Activated CD4-positive, alpha-beta T cell treated with anti-CD3 and anti-CD28 coated beads for 36 hours (primary cell): ENCODE measurements at regions of chr10 and their contacts with region 1.

Region 1: GRCh38 chr10:63268798-63269503 is 135.8 kb downstream of the NRBF2 start:
- DNase-seq: peak; percentile 86
- ATAC-seq: peak; percentile 91
- H3K4me3 Mint-ChIP-seq: peak overlapping the region; percentile 94
- H3K27ac Mint-ChIP-seq: peak overlapping the region; percentile 99
- H3K4me1 Mint-ChIP-seq: peaks cover 21% of the 10 kb centered on the region
- H3K27me3 Mint-ChIP-seq: no peaks in the 10 kb centered on the region

Region 2: DNA sequence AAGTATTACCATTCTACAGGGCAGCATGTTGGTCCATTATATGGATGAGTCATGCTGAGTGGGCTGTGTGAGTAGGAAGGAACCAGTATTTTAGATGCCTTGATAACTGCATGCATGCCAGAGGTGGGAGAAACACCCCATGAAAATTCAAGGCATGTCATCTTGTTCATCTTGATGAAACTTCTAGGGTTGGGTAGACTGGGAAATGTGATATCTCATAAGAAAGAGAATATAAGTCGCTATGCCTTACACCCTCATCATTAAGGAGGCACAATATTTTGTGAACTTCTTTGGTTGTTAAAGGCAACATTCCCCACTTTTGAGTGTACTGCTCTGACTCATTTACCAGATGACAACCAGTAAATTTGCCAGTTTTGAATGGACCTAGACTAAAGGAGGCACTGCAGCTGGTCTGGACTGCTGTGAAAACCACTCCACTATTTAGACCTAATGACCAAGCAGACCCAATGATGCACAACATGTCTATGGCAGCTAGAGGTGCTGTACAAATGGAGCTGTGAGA is 846.8 kb before region 1 on chr10:
- CTCF ChIA-PET with region 1: no interaction called
- POLR2A ChIA-PET with region 1: no interaction called
- intact Hi-C with region 1: loop called in 1 of 2 experiments (anchors 2 kb)
- DNase-seq: no peak
- ATAC-seq: no peak
- H3K4me3 Mint-ChIP-seq: no peak overlapping the region
- H3K27ac Mint-ChIP-seq: no peak overlapping the region
- H3K4me1 Mint-ChIP-seq: peaks cover 23% of the 10 kb centered on the region
- H3K27me3 Mint-ChIP-seq: peaks cover 10% of the 10 kb centered on the region

Region 3: GRCh38 chr10:62992145-62992721 is 276.7 kb before region 1 on chr10:
- CTCF ChIA-PET with region 1: no interaction called
- POLR2A ChIA-PET with region 1: no interaction called
- intact Hi-C with region 1: loop called in 1 of 2 experiments (anchors 10 kb)
- DNase-seq: peak; percentile 28
- ATAC-seq: peak; percentile 19
- H3K4me3 Mint-ChIP-seq: peak overlapping the region; percentile 26
- H3K27ac Mint-ChIP-seq: peak overlapping the region; percentile 82
- H3K4me1 Mint-ChIP-seq: peaks cover 63% of the 10 kb centered on the region
- H3K27me3 Mint-ChIP-seq: peaks cover 3% of the 10 kb centered on the region

Region 4: GRCh38 chr10:63115732-63116383 is 153.1 kb before region 1 on chr10:
- CTCF ChIA-PET with region 1: no interaction called
- POLR2A ChIA-PET with region 1: no interaction called
- intact Hi-C with region 1: no loop called
- DNase-seq: no peak
- ATAC-seq: no peak
- H3K4me3 Mint-ChIP-seq: no peak overlapping the region
- H3K27ac Mint-ChIP-seq: no peak overlapping the region
- H3K4me1 Mint-ChIP-seq: no peaks in the 10 kb centered on the region
- H3K27me3 Mint-ChIP-seq: peaks cover 7% of the 10 kb centered on the region

Region 5: GRCh38 chr10:63206997-63207811 is 61.7 kb before region 1 on chr10:
- CTCF ChIA-PET with region 1: no interaction called
- POLR2A ChIA-PET with region 1: no interaction called
- intact Hi-C with region 1: loop called in 1 of 2 experiments (anchors 1 kb)
- DNase-seq: no peak
- ATAC-seq: peak; percentile 44
- H3K4me3 Mint-ChIP-seq: no peak overlapping the region
- H3K27ac Mint-ChIP-seq: peak overlapping the region; percentile 49
- H3K4me1 Mint-ChIP-seq: peaks cover 58% of the 10 kb centered on the region
- H3K27me3 Mint-ChIP-seq: no peaks in the 10 kb centered on the region

Region 6: GRCh38 chr10:63236113-63236935 is 32.6 kb before region 1 on chr10:
- CTCF ChIA-PET with region 1: interaction called, 8 read pairs
- POLR2A ChIA-PET with region 1: interaction called, 12 read pairs
- intact Hi-C with region 1: loop called (anchors 1 to 2 kb)
- DNase-seq: peak; percentile 36
- ATAC-seq: peak; percentile 85
- H3K4me3 Mint-ChIP-seq: no peak overlapping the region
- H3K27ac Mint-ChIP-seq: peak overlapping the region; percentile 47
- H3K4me1 Mint-ChIP-seq: peaks cover 67% of the 10 kb centered on the region
- H3K27me3 Mint-ChIP-seq: no peaks in the 10 kb centered on the region

Region 7: GRCh38 chr10:63521416-63522276 is 252.7 kb after region 1 on chr10:
- CTCF ChIA-PET with region 1: no interaction called
- POLR2A ChIA-PET with region 1: interaction called, 4 read pairs
- intact Hi-C with region 1: loop called (anchors 1 kb)
- DNase-seq: peak; percentile 75
- ATAC-seq: peak; percentile 72
- H3K4me3 Mint-ChIP-seq: peak overlapping the region; percentile 86
- H3K27ac Mint-ChIP-seq: peak overlapping the region; percentile 94
- H3K4me1 Mint-ChIP-seq: peaks cover 57% of the 10 kb centered on the region
- H3K27me3 Mint-ChIP-seq: no peaks in the 10 kb centered on the region